ENCODE measurements at regions of chr4 and their contacts with region 1.

Region 1: DNA sequence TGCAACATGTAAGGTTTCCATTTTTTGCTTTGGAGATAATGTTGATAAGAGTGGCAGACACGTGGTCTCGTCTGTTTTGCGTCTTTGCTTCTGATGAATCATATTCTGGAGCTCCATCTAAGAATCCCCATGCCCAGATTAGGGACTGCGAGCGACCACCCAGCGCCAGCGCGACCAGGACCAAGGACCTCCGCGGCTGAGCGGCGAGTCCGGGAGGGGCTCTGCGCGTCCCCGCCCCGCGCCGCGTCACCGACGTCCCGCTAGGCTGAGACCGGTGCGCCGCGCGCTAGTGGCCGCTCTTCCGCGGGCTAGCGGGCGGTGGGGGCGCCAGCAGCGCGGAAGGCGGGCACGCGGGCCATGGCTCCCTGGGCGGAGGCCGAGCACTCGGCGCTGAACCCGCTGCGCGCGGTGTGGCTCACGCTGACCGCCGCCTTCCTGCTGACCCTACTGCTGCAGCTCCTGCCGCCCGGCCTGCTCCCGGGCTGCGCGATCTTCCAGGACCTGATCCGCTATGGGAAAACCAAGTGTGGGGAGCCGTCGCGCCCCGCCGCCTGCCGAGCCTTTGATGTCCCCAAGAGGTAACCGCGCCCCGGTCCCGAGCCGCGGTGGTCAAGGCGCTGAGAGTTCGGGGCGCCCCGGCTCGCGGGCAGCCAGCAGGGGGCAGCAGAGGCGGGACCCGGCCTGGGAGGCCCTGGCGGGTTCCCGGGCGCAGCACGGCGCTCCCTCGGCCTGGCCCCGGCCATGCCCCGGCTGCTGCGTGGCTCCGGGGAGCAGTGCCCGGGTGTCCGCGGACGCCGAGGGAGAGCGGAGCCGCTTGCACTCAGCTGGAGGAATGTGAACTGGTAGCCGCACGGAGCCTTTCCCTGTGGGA is at the start of gene SRD5A3:
- DNase-seq: peak; percentile 67 to 81 (median 74)
- H3K4me3 ChIP-seq: peak within 1 kb of the TSS; percentile 37 to 74
- H3K4me3 Mint-ChIP-seq: peak within 1 kb of the TSS; percentile 87 to 93 (median 89)
- H3K27ac ChIP-seq: peak within 1 kb of the TSS; percentile 57
- H3K27ac Mint-ChIP-seq: peak within 1 kb of the TSS; percentile 45 to 93 (median 90)
- H3K4me1 ChIP-seq: peaks cover 20% of the 10 kb centered on the region
- H3K4me1 Mint-ChIP-seq: peaks cover 10 to 19% (median 14%) of the 10 kb centered on the region in 4 donors
- H3K27me3 ChIP-seq: no peaks in the 10 kb centered on the region
- H3K27me3 Mint-ChIP-seq: no peaks in the 10 kb centered on the region
- total RNA-seq, gene SRD5A3: 2.9 to 3.5 TPM

Region 2: GRCh38 chr4:54986095-54986846 is 359.9 kb before region 1 on chr4:
- CTCF ChIA-PET with region 1: no interaction called
- POLR2A ChIA-PET with region 1: no interaction called
- intact Hi-C with region 1: no loop called
- DNase-seq: no peak
- H3K4me3 ChIP-seq: no peak overlapping the region
- H3K4me3 Mint-ChIP-seq: no peak overlapping the region
- H3K27ac ChIP-seq: no peak overlapping the region
- H3K27ac Mint-ChIP-seq: no peak overlapping the region
- H3K4me1 ChIP-seq: no peaks in the 10 kb centered on the region
- H3K4me1 Mint-ChIP-seq: no peaks in the 10 kb centered on the region
- H3K27me3 ChIP-seq: no peaks in the 10 kb centered on the region
- H3K27me3 Mint-ChIP-seq: no peaks in the 10 kb centered on the region

Region 3: DNA sequence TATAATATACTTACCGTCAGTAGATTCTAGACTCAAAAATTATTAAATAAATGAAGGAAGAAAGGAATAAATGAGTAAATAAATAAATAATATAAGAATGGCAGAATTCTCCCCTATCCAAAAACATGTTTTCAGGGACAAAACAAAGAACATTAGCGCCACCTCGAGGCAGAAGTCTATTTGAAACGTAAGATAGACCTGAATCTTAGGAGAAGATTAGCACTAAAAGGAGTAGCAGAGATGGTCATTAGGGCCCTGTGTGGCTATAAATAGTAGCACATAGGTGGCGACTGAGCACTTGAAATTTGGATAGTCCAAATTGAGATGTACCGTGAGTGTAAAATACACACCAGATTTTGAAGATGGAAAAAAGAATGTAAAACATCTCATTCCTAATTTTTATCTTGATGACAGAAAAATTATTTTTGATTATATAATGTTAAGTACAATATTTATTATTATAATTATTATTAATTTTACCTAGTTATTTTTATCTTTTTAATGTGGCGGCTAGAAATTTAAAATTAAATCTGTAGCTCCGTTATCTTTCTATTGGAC is 24.4 kb before region 1 on chr4:
- CTCF ChIA-PET with region 1: interaction called, 19 read pairs
- POLR2A ChIA-PET with region 1: no interaction called
- intact Hi-C with region 1: no loop called
- DNase-seq: peak in 2 of 5 donors; percentile 18 to 23
- H3K4me3 ChIP-seq: no peak overlapping the region
- H3K4me3 Mint-ChIP-seq: no peak overlapping the region
- H3K27ac ChIP-seq: no peak overlapping the region
- H3K27ac Mint-ChIP-seq: no peak overlapping the region
- H3K4me1 ChIP-seq: peaks cover 15% of the 10 kb centered on the region
- H3K4me1 Mint-ChIP-seq: peaks cover 15 to 23% (median 19%) of the 10 kb centered on the region in 4 donors
- H3K27me3 ChIP-seq: no peaks in the 10 kb centered on the region
- H3K27me3 Mint-ChIP-seq: peaks cover 0 to 2% of the 10 kb centered on the region in 2 donors

Region 4: DNA sequence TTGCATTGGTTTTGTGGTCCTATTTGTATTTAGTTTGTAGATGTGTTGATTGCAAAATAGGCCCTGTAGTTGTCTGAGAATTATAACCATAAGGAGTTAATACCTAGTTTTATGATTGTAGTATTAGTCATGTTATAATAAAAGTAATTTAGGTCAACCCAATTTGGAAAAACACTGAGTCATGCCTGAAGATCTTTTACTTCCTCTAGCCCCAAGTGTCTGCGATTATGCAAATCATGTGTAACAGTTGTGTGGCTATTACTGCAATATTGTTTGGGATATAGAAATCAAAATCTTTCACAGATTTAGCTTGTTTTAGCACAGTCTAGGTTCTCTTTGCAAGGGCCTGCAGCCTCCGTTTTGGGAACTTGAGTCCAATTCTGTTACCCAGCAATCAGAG is 12.5 kb after region 1 on chr4:
- CTCF ChIA-PET with region 1: interaction called, 38 read pairs
- POLR2A ChIA-PET with region 1: interaction called, 3 read pairs
- intact Hi-C with region 1: no loop called
- DNase-seq: no peak
- H3K4me3 ChIP-seq: no peak overlapping the region
- H3K4me3 Mint-ChIP-seq: no peak overlapping the region
- H3K27ac ChIP-seq: no peak overlapping the region
- H3K27ac Mint-ChIP-seq: peak overlapping the region in 1 of 7 donors; percentile 53
- H3K4me1 ChIP-seq: no peaks in the 10 kb centered on the region
- H3K4me1 Mint-ChIP-seq: peaks cover 0 to 10% (median 2%) of the 10 kb centered on the region in 4 donors
- H3K27me3 ChIP-seq: no peaks in the 10 kb centered on the region
- H3K27me3 Mint-ChIP-seq: no peaks in the 10 kb centered on the region

Region 5: GRCh38 chr4:55444827-55445226 is 98.6 kb after region 1 on chr4:
- CTCF ChIA-PET with region 1: interaction called, 14 read pairs
- POLR2A ChIA-PET with region 1: no interaction called
- intact Hi-C with region 1: no loop called
- DNase-seq: no peak
- H3K4me3 ChIP-seq: no peak overlapping the region
- H3K4me3 Mint-ChIP-seq: no peak overlapping the region
- H3K27ac ChIP-seq: no peak overlapping the region
- H3K27ac Mint-ChIP-seq: peak overlapping the region in 1 of 7 donors; percentile 36
- H3K4me1 ChIP-seq: peaks cover 10% of the 10 kb centered on the region
- H3K4me1 Mint-ChIP-seq: peaks cover 6 to 12% (median 9%) of the 10 kb centered on the region in 4 donors
- H3K27me3 ChIP-seq: no peaks in the 10 kb centered on the region
- H3K27me3 Mint-ChIP-seq: no peaks in the 10 kb centered on the region

Region 6: DNA sequence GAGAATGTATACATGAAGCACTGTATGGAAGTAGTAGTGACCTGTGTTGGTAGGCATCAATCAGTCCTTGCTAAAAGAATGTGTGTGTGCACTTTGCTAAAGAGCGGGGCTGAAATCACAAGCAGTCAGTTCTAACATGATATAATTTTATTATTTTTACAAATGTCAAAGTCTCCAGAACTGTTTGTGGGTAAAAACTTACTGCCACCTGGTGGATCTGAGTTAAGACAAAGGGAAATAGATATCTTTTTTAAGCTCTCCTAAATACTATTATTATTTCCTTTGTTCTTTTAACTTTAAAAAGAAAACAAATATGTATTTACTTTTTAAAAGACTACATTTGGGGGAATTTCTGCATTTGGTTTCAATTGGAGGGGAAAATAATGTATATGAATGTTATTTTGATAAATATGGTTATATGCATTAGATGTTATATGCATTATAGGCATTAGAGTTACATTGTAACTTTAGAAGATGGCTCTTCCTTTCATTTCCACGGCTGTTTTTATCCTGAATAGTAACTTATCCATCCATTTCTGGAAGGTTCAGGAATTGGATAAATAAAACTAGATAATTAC is 208.3 kb after region 1 on chr4:
- CTCF ChIA-PET with region 1: interaction called, 36 read pairs
- POLR2A ChIA-PET with region 1: no interaction called
- intact Hi-C with region 1: loop called (anchors 1 kb)
- DNase-seq: peak in 4 of 5 donors; percentile 36 to 48 (median 41)
- H3K4me3 ChIP-seq: no peak overlapping the region
- H3K4me3 Mint-ChIP-seq: no peak overlapping the region
- H3K27ac ChIP-seq: no peak overlapping the region
- H3K27ac Mint-ChIP-seq: no peak overlapping the region
- H3K4me1 ChIP-seq: peaks cover 9% of the 10 kb centered on the region
- H3K4me1 Mint-ChIP-seq: peaks cover 3 to 19% (median 8%) of the 10 kb centered on the region in 4 donors
- H3K27me3 ChIP-seq: no peaks in the 10 kb centered on the region
- H3K27me3 Mint-ChIP-seq: peaks cover 6 to 9% of the 10 kb centered on the region in 2 donors

Region 7: DNA sequence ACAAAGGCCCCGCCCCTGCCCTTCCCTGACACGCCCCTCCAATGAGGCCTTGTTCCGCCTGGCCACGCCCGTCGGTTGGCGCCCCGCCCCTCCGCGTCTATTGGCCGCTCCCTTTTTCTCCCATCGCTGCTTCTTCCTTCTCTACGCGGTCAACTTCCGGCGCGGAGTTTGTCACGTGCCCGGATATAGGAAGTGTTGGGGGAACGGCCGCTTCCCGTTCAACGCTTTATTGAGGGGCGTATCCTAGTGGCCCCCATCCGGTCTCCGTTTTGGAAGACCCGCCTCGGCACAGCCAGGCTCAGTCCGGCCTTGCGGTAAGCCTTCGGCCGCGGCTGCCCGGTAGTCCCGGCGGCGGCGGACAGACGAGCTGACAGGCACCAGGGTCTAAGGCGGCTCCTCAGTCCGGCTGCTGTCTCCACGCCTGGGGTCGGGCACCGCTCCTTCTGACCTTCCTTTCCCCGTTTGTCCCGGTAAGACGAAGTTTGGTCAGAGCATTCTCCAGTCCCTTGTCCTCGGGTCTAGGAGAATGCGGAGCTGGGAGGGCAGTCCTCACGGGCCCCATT is 507.4 kb after region 1 on chr4 and contains the start of gene EXOC1:
- CTCF ChIA-PET with region 1: interaction called, 6 read pairs
- POLR2A ChIA-PET with region 1: interaction called, 3 read pairs
- intact Hi-C with region 1: loop called (anchors 5 kb)
- DNase-seq: peak; percentile 93 to 96 (median 93)
- H3K4me3 ChIP-seq: peak within 1 kb of the TSS; percentile 83 to 97
- H3K4me3 Mint-ChIP-seq: peak within 1 kb of the TSS in 4 of 8 donors; percentile 40 to 67 (median 46)
- H3K27ac ChIP-seq: peak within 1 kb of the TSS; percentile 81
- H3K27ac Mint-ChIP-seq: peak within 1 kb of the TSS in 5 of 7 donors; percentile 36 to 96 (median 84)
- H3K4me1 ChIP-seq: peaks cover 44% of the 10 kb centered on the region
- H3K4me1 Mint-ChIP-seq: peaks cover 30 to 47% (median 38%) of the 10 kb centered on the region in 4 donors
- H3K27me3 ChIP-seq: no peaks in the 10 kb centered on the region
- H3K27me3 Mint-ChIP-seq: no peaks in the 10 kb centered on the region
- total RNA-seq, gene EXOC1: 41.9 to 50.7 TPM

Measured in CD4-positive, alpha-beta memory T cell (primary cell).